Calu3 (cell line): ENCODE measurements at regions of chr2 and their contacts with region 1.

Region 1: DNA sequence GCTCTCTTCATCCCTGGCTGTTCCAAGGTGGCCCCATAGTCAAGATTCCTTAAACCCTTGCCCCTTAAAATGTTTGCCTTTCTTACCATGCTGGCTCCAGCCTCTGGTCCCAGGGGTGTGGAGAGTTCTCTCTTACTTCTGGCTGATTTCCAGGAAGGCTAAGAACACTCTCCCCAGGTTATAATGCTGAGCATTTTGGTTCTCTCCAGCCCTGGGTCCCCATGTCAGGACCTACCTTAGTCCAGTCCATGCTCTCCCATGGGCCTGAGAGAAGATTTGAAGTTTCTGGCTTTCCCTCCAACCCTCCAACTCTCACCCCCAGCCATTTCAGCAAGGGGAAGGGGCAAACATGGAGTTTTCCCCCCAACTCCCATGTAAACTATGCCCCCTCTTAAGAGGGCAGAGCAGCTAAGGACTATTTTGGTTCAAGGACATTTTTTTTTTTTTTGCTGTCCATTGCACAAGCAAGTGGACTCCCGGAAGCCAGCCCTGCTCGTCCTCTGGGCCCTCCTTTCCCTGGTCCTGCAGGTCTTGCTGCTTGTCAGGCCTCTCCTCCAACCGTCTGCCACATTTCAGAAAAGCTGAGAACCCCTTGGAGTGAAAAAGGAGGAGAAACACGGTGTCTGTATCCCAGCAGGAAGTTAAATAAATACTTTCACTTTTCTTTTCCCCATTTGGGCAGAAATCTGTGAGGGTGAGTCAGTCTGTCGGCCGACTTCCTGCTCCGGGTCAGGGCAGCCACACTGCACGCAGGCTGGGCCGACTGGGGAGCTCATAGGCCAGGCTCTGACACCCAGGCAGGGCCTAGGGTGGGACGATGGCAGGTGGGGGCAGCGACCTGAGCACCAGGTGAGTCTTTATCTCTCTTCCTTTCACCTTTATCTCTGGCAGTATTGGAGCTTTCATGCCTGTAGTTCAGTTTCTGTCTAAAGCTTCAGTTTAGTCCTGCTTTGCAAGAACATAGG is at the start of gene SP140L:
- DNase-seq: peak; percentile 82
- H3K4me3 Mint-ChIP-seq: peak within 1 kb of the TSS; percentile 89
- H3K27ac Mint-ChIP-seq: peak within 1 kb of the TSS; percentile 99
- H3K4me1 Mint-ChIP-seq: peaks cover 51% of the 10 kb centered on the region
- H3K27me3 Mint-ChIP-seq: no peaks in the 10 kb centered on the region
- CTCF ChIP-seq: no peak
- total RNA-seq, gene SP140L: 35.4 and 55.2 TPM in 2 replicates

Region 2: GRCh38 chr2:230411570-230412370 is 85.0 kb after region 1 on chr2:
- CTCF ChIA-PET with region 1: no interaction called
- intact Hi-C with region 1: loop called (anchors 5 kb)
- DNase-seq: peak; percentile 68
- H3K4me3 Mint-ChIP-seq: peak overlapping the region; percentile 91
- H3K27ac Mint-ChIP-seq: peak overlapping the region; percentile 87
- H3K4me1 Mint-ChIP-seq: peaks cover 38% of the 10 kb centered on the region
- H3K27me3 Mint-ChIP-seq: no peaks in the 10 kb centered on the region
- CTCF ChIP-seq: no peak